ENCODE measurements at regions of chr16 and their contacts with region 1.

Region 1: GRCh38 chr16:29973384-29974246 is at the start of gene TAOK2:
- DNase-seq: peak; percentile 97
- H3K4me3 Mint-ChIP-seq: peak within 1 kb of the TSS; percentile 96
- H3K27ac Mint-ChIP-seq: peak within 1 kb of the TSS; percentile 98
- H3K4me1 Mint-ChIP-seq: peaks cover 27% of the 10 kb centered on the region
- H3K27me3 Mint-ChIP-seq: no peaks in the 10 kb centered on the region
- CTCF ChIP-seq: no peak
- total RNA-seq, gene TAOK2: 29.3 and 33.1 TPM in 2 replicates

Region 2: DNA sequence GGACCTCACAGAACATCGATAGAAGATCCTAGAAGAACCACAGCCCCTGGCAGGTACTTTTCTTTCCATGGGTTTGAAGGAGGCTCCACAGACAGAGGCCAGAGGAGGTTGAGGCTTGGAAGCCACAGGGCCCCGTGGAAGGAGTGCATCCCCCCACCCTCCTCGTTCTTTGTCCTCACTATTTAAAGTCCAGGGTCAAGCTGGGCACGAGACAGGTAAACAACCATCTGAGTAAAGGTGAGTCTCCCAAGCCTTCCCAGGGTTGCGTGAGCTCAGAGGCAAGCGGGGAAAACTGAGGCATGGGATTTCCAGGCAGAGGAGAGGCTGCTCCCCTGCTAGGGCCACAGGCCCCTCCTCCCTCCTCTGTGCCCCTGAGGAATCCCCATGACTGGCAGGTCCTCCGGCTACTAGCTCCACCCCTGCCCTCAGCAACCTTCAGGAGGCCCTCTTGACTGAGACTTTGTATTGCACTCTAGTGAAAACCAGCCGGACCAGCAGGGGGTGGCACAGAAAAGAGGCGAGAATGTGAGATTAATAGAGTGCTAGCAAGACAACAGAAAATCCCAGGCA is 1375.8 kb before region 1 on chr16:
- CTCF ChIA-PET with region 1: no interaction called
- POLR2A ChIA-PET with region 1: no interaction called
- intact Hi-C with region 1: no loop called
- DNase-seq: no peak
- H3K4me3 Mint-ChIP-seq: no peak overlapping the region
- H3K27ac Mint-ChIP-seq: no peak overlapping the region
- H3K4me1 Mint-ChIP-seq: peaks cover 4% of the 10 kb centered on the region
- H3K27me3 Mint-ChIP-seq: no peaks in the 10 kb centered on the region
- CTCF ChIP-seq: no peak

Region 3: GRCh38 chr16:29805378-29806098 is 168.1 kb before region 1 on chr16:
- CTCF ChIA-PET with region 1: interaction called, 4 read pairs
- POLR2A ChIA-PET with region 1: interaction called, 17 read pairs
- intact Hi-C with region 1: no loop called
- DNase-seq: peak; percentile 95
- H3K4me3 Mint-ChIP-seq: peak overlapping the region; percentile 92
- H3K27ac Mint-ChIP-seq: peak overlapping the region; percentile 98
- H3K4me1 Mint-ChIP-seq: peaks cover 29% of the 10 kb centered on the region
- H3K27me3 Mint-ChIP-seq: no peaks in the 10 kb centered on the region
- CTCF ChIP-seq: no peak

Region 4: GRCh38 chr16:29900102-29900887 is 73.3 kb before region 1 on chr16 and contains the start of gene ASPHD1:
- CTCF ChIA-PET with region 1: interaction called, 3 read pairs
- POLR2A ChIA-PET with region 1: interaction called, 20 read pairs
- intact Hi-C with region 1: no loop called
- DNase-seq: peak; percentile 65
- H3K4me3 Mint-ChIP-seq: peak within 1 kb of the TSS; percentile 91
- H3K27ac Mint-ChIP-seq: peak within 1 kb of the TSS; percentile 81
- H3K4me1 Mint-ChIP-seq: peaks cover 10% of the 10 kb centered on the region
- H3K27me3 Mint-ChIP-seq: peaks cover 27% of the 10 kb centered on the region
- CTCF ChIP-seq: no peak
- total RNA-seq, gene ASPHD1: 4.8 and 5.7 TPM in 2 replicates

Region 5: DNA sequence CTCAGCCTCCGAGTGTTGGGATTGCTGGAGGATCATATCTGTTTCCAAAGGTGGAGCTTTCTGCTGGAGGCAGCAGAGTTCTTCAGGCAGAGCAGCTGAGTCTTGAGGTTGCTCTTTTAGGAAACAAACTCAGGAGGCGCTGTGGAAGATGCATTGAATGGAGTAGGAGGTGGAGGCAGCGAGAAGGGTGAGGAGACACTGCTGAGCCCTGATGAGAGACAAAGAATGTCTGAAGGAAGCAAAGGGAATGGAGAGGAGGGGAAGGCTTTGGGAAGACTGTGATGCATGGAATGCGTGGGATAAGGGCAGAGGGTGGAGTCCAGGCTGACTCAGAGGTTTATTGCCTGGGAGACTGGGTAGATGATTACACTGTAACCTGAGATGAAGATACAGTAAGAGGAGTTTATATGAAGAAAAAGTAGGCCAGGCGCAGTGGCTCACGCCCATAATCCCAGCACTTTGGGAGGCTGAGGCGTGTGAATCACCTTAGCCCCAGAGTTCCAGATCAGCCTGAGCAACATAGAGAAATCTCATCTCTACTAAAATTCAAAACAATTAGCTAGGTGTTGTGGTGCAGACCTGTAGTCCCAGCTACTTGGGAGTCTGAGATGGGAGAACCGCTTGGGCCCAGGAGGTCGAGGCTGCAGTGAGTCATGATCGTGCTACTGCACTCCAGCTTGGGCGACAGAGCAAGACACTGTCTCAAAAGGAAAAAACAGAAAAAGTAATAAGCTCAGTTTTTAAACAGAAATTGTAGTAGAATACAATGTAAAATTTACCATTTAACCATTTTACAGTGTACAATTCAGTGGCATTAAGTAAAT is 29.6 kb before region 1 on chr16:
- CTCF ChIA-PET with region 1: interaction called, 3 read pairs
- POLR2A ChIA-PET with region 1: interaction called, 34 read pairs
- intact Hi-C with region 1: no loop called
- DNase-seq: peak; percentile 96
- H3K4me3 Mint-ChIP-seq: peak overlapping the region; percentile 24
- H3K27ac Mint-ChIP-seq: peak overlapping the region; percentile 65
- H3K4me1 Mint-ChIP-seq: peaks cover 8% of the 10 kb centered on the region
- H3K27me3 Mint-ChIP-seq: no peaks in the 10 kb centered on the region
- CTCF ChIP-seq: no peak

Region 6: GRCh38 chr16:29995911-29996772 is 22.5 kb after region 1 on chr16 and contains the start of gene INO80E:
- CTCF ChIA-PET with region 1: interaction called, 6 read pairs
- POLR2A ChIA-PET with region 1: interaction called, 72 read pairs
- intact Hi-C with region 1: no loop called
- DNase-seq: peak; percentile 96
- H3K4me3 Mint-ChIP-seq: peak within 1 kb of the TSS; percentile 98
- H3K27ac Mint-ChIP-seq: peak within 1 kb of the TSS; percentile 95
- H3K4me1 Mint-ChIP-seq: peaks cover 11% of the 10 kb centered on the region
- H3K27me3 Mint-ChIP-seq: no peaks in the 10 kb centered on the region
- CTCF ChIP-seq: no peak
- total RNA-seq, gene INO80E: 82.0 and 90.1 TPM in 2 replicates

Region 7: GRCh38 chr16:30417529-30418349 is 444.1 kb after region 1 on chr16:
- CTCF ChIA-PET with region 1: no interaction called
- POLR2A ChIA-PET with region 1: no interaction called
- intact Hi-C with region 1: no loop called
- DNase-seq: peak; percentile 74
- H3K4me3 Mint-ChIP-seq: peak overlapping the region; percentile 58
- H3K27ac Mint-ChIP-seq: no peak overlapping the region
- H3K4me1 Mint-ChIP-seq: peaks cover 4% of the 10 kb centered on the region
- H3K27me3 Mint-ChIP-seq: no peaks in the 10 kb centered on the region
- CTCF ChIP-seq: no peak